Dorsolateral prefrontal cortex (tissue), 120 donors: ENCODE measurements at regions of chr4 and their contacts with region 1.

Region 1: DNA sequence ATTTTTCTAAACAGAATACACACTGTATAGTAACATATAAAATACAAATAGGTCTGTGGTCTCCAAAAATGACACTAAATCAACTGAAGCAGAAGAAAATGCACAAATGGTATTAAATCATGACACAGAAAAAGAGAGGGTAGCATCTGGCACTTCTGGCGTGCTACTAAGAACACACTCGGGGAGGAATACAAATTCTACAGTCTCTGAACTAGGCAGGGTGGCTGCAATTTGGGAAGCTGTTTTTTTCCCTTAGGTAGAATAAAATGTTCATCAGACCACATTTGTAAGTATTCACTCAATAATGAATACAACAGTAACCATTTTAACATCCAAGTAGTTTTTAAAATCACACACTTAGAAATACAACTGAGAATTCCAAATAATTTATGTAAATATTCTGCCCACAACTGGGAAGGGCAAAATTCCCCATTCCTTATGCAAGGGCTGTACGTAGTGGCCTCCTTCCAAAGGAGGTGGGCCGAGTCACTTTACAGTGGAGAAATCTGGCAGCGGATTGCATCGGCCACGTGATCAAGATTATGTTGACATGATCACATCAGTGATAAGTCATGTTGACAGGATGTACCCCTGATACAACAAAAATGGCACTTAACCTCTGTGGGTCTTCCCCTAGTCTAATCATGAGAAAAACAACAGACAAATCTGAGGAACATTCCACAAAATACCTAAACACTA is 101.1 kb downstream of the TSPAN5 start:
- DNase-seq: no peak
- H3K4me3 ChIP-seq: peak overlapping the region in 7 of 59 donors; percentile 2 to 25 (median 16)
- H3K27ac ChIP-seq: peak overlapping the region in 58 of 59 donors; percentile 11 to 99 (median 68)
- H3K27me3 ChIP-seq: no peaks in the 10 kb centered on the region
- CTCF ChIP-seq: no peak

Region 2: DNA sequence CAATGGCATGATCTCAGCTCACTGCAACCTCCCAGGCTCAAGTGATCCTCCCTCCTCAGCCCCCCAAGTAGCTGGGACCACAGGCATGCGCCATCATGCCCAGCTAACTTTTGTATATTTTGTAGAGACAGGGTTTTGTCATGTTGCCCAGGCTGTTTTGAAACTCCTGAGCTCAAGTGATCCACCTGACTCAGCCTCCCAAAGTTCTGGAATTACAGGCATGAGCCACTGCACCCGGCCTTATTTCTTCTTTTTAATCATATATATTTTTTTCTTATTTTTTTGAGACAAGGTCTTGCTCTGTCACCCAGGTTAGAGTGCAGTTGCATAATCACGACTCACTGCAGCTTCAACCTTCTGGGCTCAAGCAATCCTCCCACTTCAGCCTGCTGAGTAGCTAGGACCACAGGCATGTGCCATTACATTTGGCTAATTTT is 82.9 kb before region 1 on chr4:
- intact Hi-C with region 1: loop called in 1 of 2 experiments (anchors 5 kb)
- DNase-seq: no peak
- H3K4me3 ChIP-seq: no peak overlapping the region
- H3K27ac ChIP-seq: peak overlapping the region in 3 of 59 donors; percentile 6 to 35 (median 14)
- H3K27me3 ChIP-seq: no peaks in the 10 kb centered on the region
- CTCF ChIP-seq: no peak